ENCODE measurements at regions of chr17 and their contacts with region 1.

Region 1: GRCh38 chr17:5097101-5097834 is 14.4 kb downstream of the ZNF232 start:
- DNase-seq: peak; percentile 67
- H3K4me3 ChIP-seq: peak overlapping the region; percentile 72
- H3K27ac ChIP-seq: peak overlapping the region; percentile 79
- H3K4me1 ChIP-seq: peaks cover 11% of the 10 kb centered on the region
- H3K27me3 ChIP-seq: no peaks in the 10 kb centered on the region
- CTCF ChIP-seq: no peak

Region 2: GRCh38 chr17:5184288-5184687 is 87.0 kb after region 1 on chr17:
- intact Hi-C with region 1: loop called (anchors 10 kb)
- DNase-seq: no peak
- H3K4me3 ChIP-seq: no peak overlapping the region
- H3K27ac ChIP-seq: no peak overlapping the region
- H3K4me1 ChIP-seq: no peaks in the 10 kb centered on the region
- H3K27me3 ChIP-seq: no peaks in the 10 kb centered on the region
- CTCF ChIP-seq: no peak

Measured in left ventricle myocardium inferior (tissue), 1 donor.